ENCODE measurements at regions of chr14 and their contacts with region 1.

Region 1: GRCh38 chr14:103984196-103984595 is 41.9 kb upstream of the RD3L start:
- DNase-seq: no peak

Region 2: DNA sequence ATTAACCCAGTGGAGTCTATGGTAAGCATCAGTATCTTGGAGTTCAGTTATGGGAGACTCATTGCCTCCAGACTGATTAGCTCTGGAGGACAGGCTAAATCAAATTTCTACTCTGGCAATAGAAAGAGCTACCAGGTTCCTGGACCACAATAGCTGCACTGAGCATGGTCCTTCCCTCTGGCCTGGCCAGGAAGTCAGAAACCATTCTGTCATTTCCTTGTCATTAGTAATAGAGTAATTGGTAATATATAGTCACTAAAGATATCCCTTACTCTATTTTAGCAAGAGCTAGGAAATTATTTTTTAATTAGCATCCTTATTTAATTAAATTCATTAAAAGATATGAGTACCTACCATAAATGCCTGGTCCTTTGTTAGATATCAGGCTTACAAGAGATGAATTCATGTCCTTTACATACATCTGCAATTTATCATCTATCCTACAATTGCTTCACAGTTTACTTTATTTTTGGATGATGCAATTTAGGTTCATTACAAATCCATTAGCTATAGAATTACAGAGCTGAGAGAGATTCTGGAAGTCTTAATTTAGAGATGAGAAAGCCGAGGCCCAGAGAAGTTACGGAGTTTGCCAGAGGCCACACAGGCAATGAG is 79.6 kb before region 1 on chr14:
- intact Hi-C with region 1: loop called (anchors 5 kb)
- DNase-seq: no peak